Caco-2 (cell line): ENCODE measurements at regions of chr3 and their contacts with region 1.

Region 1: DNA sequence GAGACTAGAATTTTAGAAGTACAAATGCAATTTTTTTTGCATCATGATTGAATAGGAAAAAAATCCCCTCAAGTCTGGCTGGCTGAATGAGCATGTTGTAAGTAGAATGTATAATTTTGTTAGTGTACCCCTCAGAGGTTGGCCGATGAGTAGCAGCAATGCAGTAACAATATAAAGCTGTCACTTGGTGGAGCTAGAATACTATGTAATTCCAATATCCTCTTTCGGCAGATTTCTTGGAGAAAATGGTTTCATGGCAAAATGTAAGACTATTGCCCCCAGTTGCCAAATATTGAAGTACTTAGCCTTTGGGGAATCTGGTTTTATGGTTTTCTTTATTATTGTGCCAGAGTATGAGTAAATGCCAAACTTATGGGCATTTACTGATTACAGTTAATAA is 39.8 kb upstream of the SGO1 start:
- DNase-seq: peak in 1 of 2 experiments; percentile 44
- H3K4me3 ChIP-seq: no peak overlapping the region
- H3K4me3 Mint-ChIP-seq: no peak overlapping the region
- H3K27ac Mint-ChIP-seq: no peak overlapping the region
- H3K4me1 ChIP-seq: no peaks in the 10 kb centered on the region
- H3K4me1 Mint-ChIP-seq: no peaks in the 10 kb centered on the region
- H3K27me3 ChIP-seq: no peaks in the 10 kb centered on the region
- H3K27me3 Mint-ChIP-seq: no peaks in the 10 kb centered on the region
- CTCF ChIP-seq: peak; percentile 20 to 45

Region 2: DNA sequence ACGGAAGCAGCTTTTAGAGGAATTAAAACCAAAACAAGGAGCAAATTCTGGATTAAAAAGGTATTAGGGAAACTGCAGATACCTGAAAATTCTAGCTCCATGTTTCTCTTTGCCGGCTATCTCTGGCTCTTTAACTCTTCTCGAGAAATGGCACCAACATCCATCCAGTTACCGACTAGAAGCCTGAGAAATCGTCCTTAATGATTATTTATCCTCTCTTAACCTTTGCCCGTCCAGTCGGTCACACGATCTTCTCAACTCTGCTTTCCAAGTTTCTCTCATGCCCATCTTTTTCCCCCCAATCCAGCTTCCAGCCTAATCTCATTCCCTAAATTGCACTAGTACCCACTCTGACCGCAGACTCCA is 39.2 kb before region 1 on chr3:
- CTCF ChIA-PET with region 1: no interaction called
- POLR2A ChIA-PET with region 1: no interaction called
- intact Hi-C with region 1: no loop called
- DNase-seq: no peak
- H3K4me3 ChIP-seq: peak overlapping the region; percentile 59
- H3K4me3 Mint-ChIP-seq: no peak overlapping the region
- H3K27ac Mint-ChIP-seq: no peak overlapping the region
- H3K4me1 ChIP-seq: peaks cover 5% of the 10 kb centered on the region; the same call in 1 of the 2 replicates
- H3K4me1 Mint-ChIP-seq: no peaks in the 10 kb centered on the region
- H3K27me3 ChIP-seq: no peaks in the 10 kb centered on the region
- H3K27me3 Mint-ChIP-seq: no peaks in the 10 kb centered on the region
- CTCF ChIP-seq: no peak

Region 3: GRCh38 chr3:20340324-20340928 is 114.7 kb after region 1 on chr3:
- CTCF ChIA-PET with region 1: interaction called, 3 read pairs
- POLR2A ChIA-PET with region 1: no interaction called
- intact Hi-C with region 1: loop called (anchors 1 kb)
- DNase-seq: peak; percentile 63 to 79
- H3K4me3 ChIP-seq: no peak overlapping the region
- H3K4me3 Mint-ChIP-seq: no peak overlapping the region
- H3K27ac Mint-ChIP-seq: no peak overlapping the region
- H3K4me1 ChIP-seq: peaks cover 11% of the 10 kb centered on the region
- H3K4me1 Mint-ChIP-seq: no peaks in the 10 kb centered on the region
- H3K27me3 ChIP-seq: no peaks in the 10 kb centered on the region
- H3K27me3 Mint-ChIP-seq: no peaks in the 10 kb centered on the region
- CTCF ChIP-seq: peak; percentile 84 to 85

Region 4: GRCh38 chr3:20668411-20668810 is 442.6 kb after region 1 on chr3:
- CTCF ChIA-PET with region 1: no interaction called
- POLR2A ChIA-PET with region 1: no interaction called
- intact Hi-C with region 1: loop called (anchors 1 kb)
- DNase-seq: peak; percentile 30
- H3K4me3 ChIP-seq: no peak overlapping the region
- H3K4me3 Mint-ChIP-seq: no peak overlapping the region
- H3K27ac Mint-ChIP-seq: no peak overlapping the region
- H3K4me1 ChIP-seq: no peaks in the 10 kb centered on the region
- H3K4me1 Mint-ChIP-seq: no peaks in the 10 kb centered on the region
- H3K27me3 ChIP-seq: no peaks in the 10 kb centered on the region
- H3K27me3 Mint-ChIP-seq: peaks cover 6% of the 10 kb centered on the region
- CTCF ChIP-seq: peak in 1 of 2 experiments; percentile 35

Region 5: DNA sequence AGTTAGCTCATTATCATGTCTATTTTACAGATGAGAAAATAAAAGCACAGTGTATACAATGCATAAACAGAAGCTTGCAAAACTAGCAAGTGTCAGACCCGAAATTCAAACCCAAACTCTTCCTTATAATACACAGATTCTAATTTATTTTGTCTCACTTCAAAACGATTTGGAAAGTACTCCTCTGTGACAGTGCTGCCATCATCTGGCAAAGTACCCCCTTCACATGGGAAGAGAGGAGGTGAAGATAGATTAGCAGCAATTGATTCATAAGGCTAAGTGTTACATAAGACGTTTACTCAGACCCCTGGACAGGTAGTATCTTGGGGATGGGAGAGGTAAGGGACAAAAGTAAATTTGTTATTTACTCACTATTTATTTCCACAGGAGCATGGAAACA is 704.3 kb after region 1 on chr3:
- CTCF ChIA-PET with region 1: no interaction called
- POLR2A ChIA-PET with region 1: no interaction called
- intact Hi-C with region 1: loop called (anchors 5 kb)
- DNase-seq: peak in 1 of 2 experiments; percentile 27
- H3K4me3 ChIP-seq: no peak overlapping the region
- H3K4me3 Mint-ChIP-seq: no peak overlapping the region
- H3K27ac Mint-ChIP-seq: no peak overlapping the region
- H3K4me1 ChIP-seq: no peaks in the 10 kb centered on the region
- H3K4me1 Mint-ChIP-seq: no peaks in the 10 kb centered on the region
- H3K27me3 ChIP-seq: no peaks in the 10 kb centered on the region
- H3K27me3 Mint-ChIP-seq: peaks cover 4% of the 10 kb centered on the region
- CTCF ChIP-seq: peak in 1 of 2 experiments; percentile 36

Region 6: GRCh38 chr3:21551019-21551418 is 1325.2 kb after region 1 on chr3:
- CTCF ChIA-PET with region 1: no interaction called
- POLR2A ChIA-PET with region 1: no interaction called
- intact Hi-C with region 1: loop called (anchors 10 kb)
- DNase-seq: peak in 1 of 2 experiments; percentile 34
- H3K4me3 ChIP-seq: no peak overlapping the region
- H3K4me3 Mint-ChIP-seq: no peak overlapping the region
- H3K27ac Mint-ChIP-seq: no peak overlapping the region
- H3K4me1 ChIP-seq: no peaks in the 10 kb centered on the region
- H3K4me1 Mint-ChIP-seq: no peaks in the 10 kb centered on the region
- H3K27me3 ChIP-seq: no peaks in the 10 kb centered on the region
- H3K27me3 Mint-ChIP-seq: no peaks in the 10 kb centered on the region
- CTCF ChIP-seq: peak in 1 of 2 experiments; percentile 8